ENCODE measurements at regions of chr6 and their contacts with region 1.

Region 1: GRCh38 chr6:68634726-68635411 is at the start of gene ADGRB3:
- DNase-seq: peak; percentile 13
- H3K4me3 Mint-ChIP-seq: peak within 1 kb of the TSS; percentile 74
- H3K27ac Mint-ChIP-seq: no peak within 1 kb of the TSS
- H3K4me1 Mint-ChIP-seq: peaks cover 13% of the 10 kb centered on the region
- H3K27me3 Mint-ChIP-seq: peaks cover 50% of the 10 kb centered on the region
- total RNA-seq, gene ADGRB3: 0.07 and 0.14 TPM in 2 replicates

Region 2: DNA sequence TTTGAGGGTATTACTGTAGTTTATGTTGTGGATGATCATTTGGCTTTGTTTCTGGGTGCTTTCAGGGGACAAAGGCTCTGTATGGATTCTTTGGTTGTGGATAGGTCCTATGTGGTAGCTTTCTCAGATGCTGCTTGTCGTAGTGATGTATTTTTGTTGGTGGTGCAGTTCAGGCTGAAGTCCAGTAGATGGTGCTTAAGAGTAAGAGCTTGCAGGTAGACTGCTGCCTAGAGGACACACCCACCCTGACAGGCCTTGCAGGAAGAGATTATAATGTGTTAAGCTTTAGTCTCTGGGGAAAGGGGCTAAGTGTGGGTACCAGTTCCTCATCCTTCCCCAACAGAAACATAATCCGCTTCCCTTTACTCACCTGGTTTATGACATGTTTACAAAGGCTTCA is 62.3 kb before region 1 on chr6:
- intact Hi-C with region 1: no loop called
- DNase-seq: no peak
- H3K4me3 Mint-ChIP-seq: no peak overlapping the region
- H3K27ac Mint-ChIP-seq: no peak overlapping the region
- H3K4me1 Mint-ChIP-seq: no peaks in the 10 kb centered on the region
- H3K27me3 Mint-ChIP-seq: no peaks in the 10 kb centered on the region

Region 3: GRCh38 chr6:68778356-68779020 is 143.6 kb after region 1 on chr6:
- intact Hi-C with region 1: loop called (anchors 10 kb)
- DNase-seq: no peak
- H3K4me3 Mint-ChIP-seq: no peak overlapping the region
- H3K27ac Mint-ChIP-seq: no peak overlapping the region
- H3K4me1 Mint-ChIP-seq: no peaks in the 10 kb centered on the region
- H3K27me3 Mint-ChIP-seq: no peaks in the 10 kb centered on the region

Region 4: GRCh38 chr6:68967549-68968300 is 332.9 kb after region 1 on chr6:
- intact Hi-C with region 1: loop called (anchors 2 kb)
- DNase-seq: peak; percentile 44
- H3K4me3 Mint-ChIP-seq: no peak overlapping the region
- H3K27ac Mint-ChIP-seq: no peak overlapping the region
- H3K4me1 Mint-ChIP-seq: peaks cover 7% of the 10 kb centered on the region
- H3K27me3 Mint-ChIP-seq: no peaks in the 10 kb centered on the region